IMR-90 (cell line): ENCODE measurements at regions of chr20 and their contacts with region 1.

Region 1: DNA sequence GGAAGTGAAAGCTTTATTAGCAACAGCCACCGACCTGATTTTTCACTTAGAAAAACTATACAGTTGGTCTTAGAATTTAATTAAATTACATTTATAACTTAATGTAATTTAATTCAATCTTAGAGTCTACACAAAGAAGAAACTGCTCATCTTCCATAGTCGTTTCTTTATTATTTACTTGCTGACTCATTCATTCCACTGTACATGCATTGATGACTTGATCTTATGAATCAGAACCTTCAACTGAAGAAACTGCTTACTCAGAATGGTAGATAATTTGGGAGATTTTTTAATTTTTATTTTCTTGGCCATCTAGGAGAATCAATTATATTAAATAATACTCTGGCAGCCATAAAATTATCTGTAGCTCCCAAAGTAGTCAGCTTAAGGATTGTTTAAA is 1021.6 kb upstream of the FLRT3 start:
- DNase-seq: peak; percentile 3
- ATAC-seq: no peak
- H3K4me3 ChIP-seq: no peak overlapping the region
- H3K27ac ChIP-seq: no peak overlapping the region
- H3K4me1 ChIP-seq: no peaks in the 10 kb centered on the region
- H3K27me3 ChIP-seq: no peaks in the 10 kb centered on the region
- CTCF ChIP-seq: no peak
- POLR2A ChIP-seq: no peak
- RAD21 ChIP-seq: no peak

Region 2: DNA sequence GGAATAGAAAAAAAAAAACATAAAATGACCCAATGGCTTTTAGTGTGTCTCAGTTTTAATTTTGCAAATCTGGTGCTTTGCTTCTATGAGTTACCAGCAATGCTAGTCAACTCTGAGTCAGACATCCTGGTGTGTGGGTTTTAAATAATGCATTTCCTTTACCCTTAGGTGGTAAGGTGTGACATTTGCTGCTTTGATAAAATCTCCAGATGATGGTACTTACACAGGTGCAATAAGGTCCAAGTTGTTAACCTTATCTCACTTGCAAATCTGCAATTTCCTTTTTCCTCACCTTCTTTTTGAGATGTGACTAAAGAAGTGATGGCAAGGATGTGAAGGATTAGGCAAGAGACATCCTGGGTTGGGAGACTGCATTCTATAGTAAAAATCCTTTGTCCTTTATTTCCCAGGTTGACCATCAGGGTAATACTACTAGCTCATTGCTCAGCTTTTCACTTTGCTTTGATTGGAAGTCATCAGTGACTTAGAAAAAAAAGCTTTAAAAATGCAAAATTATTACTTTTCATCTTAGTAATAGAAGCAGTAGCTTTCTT is 203.1 kb before region 1 on chr20:
- CTCF ChIA-PET with region 1: no interaction called
- POLR2A ChIA-PET with region 1: no interaction called
- dilution Hi-C with region 1: no loop called
- in situ Hi-C with region 1: no loop called
- intact Hi-C with region 1: no loop called
- DNase-seq: no peak
- ATAC-seq: no peak
- H3K4me3 ChIP-seq: no peak overlapping the region
- H3K27ac ChIP-seq: no peak overlapping the region
- H3K4me1 ChIP-seq: no peaks in the 10 kb centered on the region
- H3K27me3 ChIP-seq: no peaks in the 10 kb centered on the region
- CTCF ChIP-seq: no peak
- POLR2A ChIP-seq: no peak
- RAD21 ChIP-seq: no peak

Region 3: GRCh38 chr20:15336011-15336410 is 23.0 kb before region 1 on chr20:
- CTCF ChIA-PET with region 1: no interaction called
- POLR2A ChIA-PET with region 1: interaction called, 10 read pairs
- dilution Hi-C with region 1: no loop called
- in situ Hi-C with region 1: no loop called
- intact Hi-C with region 1: no loop called
- DNase-seq: no peak
- ATAC-seq: no peak
- H3K4me3 ChIP-seq: no peak overlapping the region
- H3K27ac ChIP-seq: no peak overlapping the region
- H3K4me1 ChIP-seq: no peaks in the 10 kb centered on the region
- H3K27me3 ChIP-seq: no peaks in the 10 kb centered on the region
- CTCF ChIP-seq: no peak
- POLR2A ChIP-seq: no peak
- RAD21 ChIP-seq: no peak

Region 4: GRCh38 chr20:15603978-15604805 is 245.1 kb after region 1 on chr20:
- CTCF ChIA-PET with region 1: no interaction called
- POLR2A ChIA-PET with region 1: no interaction called
- dilution Hi-C with region 1: no loop called
- in situ Hi-C with region 1: no loop called
- intact Hi-C with region 1: no loop called
- DNase-seq: no peak
- ATAC-seq: no peak
- H3K4me3 ChIP-seq: no peak overlapping the region
- H3K27ac ChIP-seq: no peak overlapping the region
- H3K4me1 ChIP-seq: no peaks in the 10 kb centered on the region
- H3K27me3 ChIP-seq: no peaks in the 10 kb centered on the region
- CTCF ChIP-seq: no peak
- POLR2A ChIP-seq: no peak
- RAD21 ChIP-seq: no peak